MCF 10A (cell line): ENCODE measurements at regions of chr12 and their contacts with region 1.

Region 1: DNA sequence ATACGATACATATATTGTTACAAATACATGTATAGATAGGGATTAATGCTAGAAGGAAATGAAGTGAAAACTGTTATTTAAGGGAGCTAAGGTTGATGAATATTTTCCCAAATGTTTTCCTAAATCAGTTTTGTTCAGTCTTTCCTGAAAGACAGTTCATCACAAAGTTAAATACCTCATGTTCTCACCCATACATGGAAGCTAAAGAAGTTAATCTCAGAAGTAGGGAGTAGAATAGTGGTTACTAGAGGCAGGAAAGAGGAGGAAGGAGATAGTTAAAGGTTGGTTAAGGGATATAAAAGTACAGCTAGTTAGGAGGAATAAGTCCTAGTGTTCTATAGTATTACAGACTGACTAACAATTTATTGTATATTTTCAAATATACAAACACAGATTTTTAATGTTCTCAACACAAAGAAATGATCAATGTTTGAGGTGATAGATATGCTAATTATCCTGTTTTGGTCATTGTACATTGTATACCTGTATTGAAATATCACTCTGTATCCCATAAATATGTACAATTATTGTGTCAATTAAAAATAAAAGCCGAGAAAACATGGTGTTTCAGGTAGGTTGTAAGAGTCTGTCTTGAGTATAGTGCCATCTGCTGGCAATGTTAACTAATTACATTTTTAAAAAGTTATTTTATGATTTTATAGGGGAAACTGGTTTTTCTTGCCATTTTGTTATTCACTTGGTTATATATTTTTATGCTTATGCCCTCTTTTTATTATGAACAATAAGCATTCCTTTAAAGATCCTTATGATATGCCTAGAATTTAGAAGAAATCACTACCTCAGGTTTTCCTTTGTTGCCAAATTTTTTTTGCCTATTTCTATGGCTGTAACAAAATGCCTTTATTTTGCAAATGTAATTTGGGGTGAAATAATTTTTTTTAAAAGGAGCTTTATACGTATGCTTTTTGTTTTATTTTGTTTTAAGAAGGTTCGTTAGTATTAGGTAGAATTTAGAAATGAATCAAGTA is 26.9 kb downstream of the ZDHHC17 start:
- DNase-seq: peak; percentile 24
- H3K4me3 Mint-ChIP-seq: no peak overlapping the region
- H3K27ac Mint-ChIP-seq: peak overlapping the region; percentile 39
- H3K4me1 Mint-ChIP-seq: no peaks in the 10 kb centered on the region
- H3K27me3 Mint-ChIP-seq: no peaks in the 10 kb centered on the region
- CTCF ChIP-seq: peak; percentile 48

Region 2: GRCh38 chr12:76290963-76291863 is 499.6 kb before region 1 on chr12:
- CTCF ChIA-PET with region 1: no interaction called
- POLR2A ChIA-PET with region 1: no interaction called
- intact Hi-C with region 1: no loop called
- DNase-seq: no peak
- H3K4me3 Mint-ChIP-seq: no peak overlapping the region
- H3K27ac Mint-ChIP-seq: peak overlapping the region; percentile 63
- H3K4me1 Mint-ChIP-seq: peaks cover 30% of the 10 kb centered on the region
- H3K27me3 Mint-ChIP-seq: no peaks in the 10 kb centered on the region
- CTCF ChIP-seq: no peak

Region 3: GRCh38 chr12:76621582-76622024 is 169.3 kb before region 1 on chr12:
- CTCF ChIA-PET with region 1: interaction called, 72 read pairs
- POLR2A ChIA-PET with region 1: interaction called, 21 read pairs
- intact Hi-C with region 1: loop called (anchors 1 kb)
- DNase-seq: peak; percentile 83
- H3K4me3 Mint-ChIP-seq: no peak overlapping the region
- H3K27ac Mint-ChIP-seq: no peak overlapping the region
- H3K4me1 Mint-ChIP-seq: peaks cover 5% of the 10 kb centered on the region
- H3K27me3 Mint-ChIP-seq: no peaks in the 10 kb centered on the region
- CTCF ChIP-seq: peak; percentile 91

Region 4: DNA sequence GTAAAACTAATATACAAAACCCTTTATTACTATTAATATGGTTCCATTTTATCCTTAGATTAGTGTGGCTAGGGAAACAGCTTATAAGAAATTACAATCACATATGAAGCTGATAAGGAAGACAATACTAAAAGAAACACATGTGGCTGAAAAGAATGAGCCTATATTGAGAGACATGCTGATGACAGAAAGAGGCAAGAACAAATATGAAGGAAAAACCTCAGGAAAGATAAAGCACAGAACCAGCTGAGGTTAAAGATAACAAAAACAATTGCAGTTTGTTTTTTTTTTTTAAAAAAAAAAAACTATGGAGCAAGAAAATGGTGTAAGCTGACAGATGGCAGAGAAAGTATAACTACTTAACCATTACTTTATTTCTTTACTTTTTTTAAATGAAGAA is 162.1 kb before region 1 on chr12:
- CTCF ChIA-PET with region 1: interaction called, 72 read pairs
- POLR2A ChIA-PET with region 1: interaction called, 21 read pairs
- intact Hi-C with region 1: no loop called
- DNase-seq: no peak
- H3K4me3 Mint-ChIP-seq: no peak overlapping the region
- H3K27ac Mint-ChIP-seq: no peak overlapping the region
- H3K4me1 Mint-ChIP-seq: no peaks in the 10 kb centered on the region
- H3K27me3 Mint-ChIP-seq: no peaks in the 10 kb centered on the region
- CTCF ChIP-seq: no peak

Region 5: DNA sequence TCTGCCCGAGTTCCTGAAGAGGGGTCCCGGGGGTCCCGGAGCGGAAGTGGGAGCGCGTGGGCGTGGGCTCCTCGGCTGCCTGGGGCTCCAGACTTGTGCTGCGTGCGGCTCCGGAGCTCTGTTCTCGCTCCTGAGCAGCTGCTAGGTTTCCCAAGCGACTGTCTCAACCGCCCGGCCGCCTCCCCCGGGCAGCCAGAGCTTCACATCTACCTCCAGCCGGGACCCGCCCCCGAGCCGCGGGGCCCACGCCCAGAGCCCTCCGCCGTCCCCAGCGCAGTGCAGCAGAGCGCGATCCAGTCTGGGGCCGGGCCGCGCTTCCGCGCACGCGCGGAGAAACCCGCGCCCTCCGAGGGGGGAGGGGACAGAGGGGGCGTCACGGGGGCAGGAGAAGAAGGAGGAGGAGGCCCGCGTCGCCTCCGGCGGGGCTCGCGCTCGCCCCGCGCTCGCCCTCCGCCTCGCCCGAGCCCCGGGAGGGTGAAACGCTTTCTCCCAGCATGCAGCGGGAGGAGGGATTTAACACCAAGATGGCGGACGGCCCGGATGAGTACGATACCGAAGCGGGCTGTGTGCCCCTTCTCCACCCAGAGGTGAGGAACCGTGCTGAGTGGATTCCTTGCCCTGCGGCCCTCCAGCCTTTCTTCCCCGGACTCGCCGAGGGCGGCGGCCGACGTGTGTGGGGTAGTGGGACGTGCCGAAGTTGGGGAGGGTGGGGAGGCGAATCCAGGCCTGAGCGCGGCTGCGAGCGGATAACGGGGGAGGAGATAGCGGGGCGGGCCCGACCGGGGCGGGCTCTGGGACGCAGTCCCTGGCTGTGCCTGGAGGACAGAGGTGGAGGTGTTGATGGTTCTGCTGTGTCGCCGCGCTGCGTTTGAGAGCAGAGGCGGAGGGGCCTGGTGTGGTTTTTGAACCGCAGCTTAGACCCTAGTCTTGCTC is 26.8 kb before region 1 on chr12 and contains the start of gene ZDHHC17:
- CTCF ChIA-PET with region 1: interaction called, 38 read pairs
- POLR2A ChIA-PET with region 1: interaction called, 11 read pairs
- intact Hi-C with region 1: no loop called
- DNase-seq: peak; percentile 90
- H3K4me3 Mint-ChIP-seq: peak within 1 kb of the TSS; percentile 95
- H3K27ac Mint-ChIP-seq: peak within 1 kb of the TSS; percentile 94
- H3K4me1 Mint-ChIP-seq: peaks cover 14% of the 10 kb centered on the region
- H3K27me3 Mint-ChIP-seq: no peaks in the 10 kb centered on the region
- CTCF ChIP-seq: no peak
- total RNA-seq, gene ZDHHC17: 26.9 and 28.3 TPM in 2 replicates

Region 6: DNA sequence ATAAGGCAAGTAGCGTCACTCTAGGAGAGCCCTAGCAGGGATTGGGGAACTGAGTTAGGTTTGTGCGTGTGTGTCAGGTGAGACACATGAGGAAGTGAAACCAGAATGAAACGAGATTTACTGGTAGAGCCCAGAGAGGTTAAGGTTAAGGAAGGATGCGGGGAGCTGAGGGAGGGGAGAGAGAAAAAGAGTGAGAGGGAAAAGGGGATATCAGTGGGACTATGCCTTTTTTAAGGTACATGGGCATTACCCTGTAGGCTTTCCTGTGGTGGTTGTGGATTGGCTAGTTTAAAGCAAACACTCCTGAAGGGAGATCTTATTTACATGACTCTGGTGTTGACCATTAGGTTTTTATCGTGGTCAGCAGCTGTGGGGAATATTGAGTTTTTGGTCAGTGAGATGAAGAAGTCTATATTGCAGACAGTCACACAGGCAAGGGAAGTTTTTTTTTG is 13.1 kb before region 1 on chr12:
- CTCF ChIA-PET with region 1: interaction called, 16 read pairs
- POLR2A ChIA-PET with region 1: no interaction called
- intact Hi-C with region 1: no loop called
- DNase-seq: no peak
- H3K4me3 Mint-ChIP-seq: no peak overlapping the region
- H3K27ac Mint-ChIP-seq: no peak overlapping the region
- H3K4me1 Mint-ChIP-seq: peaks cover 14% of the 10 kb centered on the region
- H3K27me3 Mint-ChIP-seq: no peaks in the 10 kb centered on the region
- CTCF ChIP-seq: no peak

Region 7: GRCh38 chr12:76820888-76821482 is 30.1 kb after region 1 on chr12:
- CTCF ChIA-PET with region 1: interaction called, 12 read pairs
- POLR2A ChIA-PET with region 1: interaction called, 3 read pairs
- intact Hi-C with region 1: no loop called
- DNase-seq: peak; percentile 60
- H3K4me3 Mint-ChIP-seq: no peak overlapping the region
- H3K27ac Mint-ChIP-seq: no peak overlapping the region
- H3K4me1 Mint-ChIP-seq: no peaks in the 10 kb centered on the region
- H3K27me3 Mint-ChIP-seq: no peaks in the 10 kb centered on the region
- CTCF ChIP-seq: peak; percentile 50